Dendritic cell treated with granulocyte-macrophage colony-stimulating factor and Interleukin-4, amounts not matched to agents 40 ng/mL and 50 ng/mL, for 4 days (primary cell): ENCODE measurements at regions of chr10 and their contacts with region 1.

Region 1: GRCh38 chr10:123043409-123043925 is 34.7 kb downstream of the ACADSB start:
- H3K4me3 Mint-ChIP-seq: no peak overlapping the region
- H3K27ac Mint-ChIP-seq: no peak overlapping the region
- H3K4me1 Mint-ChIP-seq: peaks cover 11% of the 10 kb centered on the region
- H3K27me3 Mint-ChIP-seq: no peaks in the 10 kb centered on the region

Region 2: DNA sequence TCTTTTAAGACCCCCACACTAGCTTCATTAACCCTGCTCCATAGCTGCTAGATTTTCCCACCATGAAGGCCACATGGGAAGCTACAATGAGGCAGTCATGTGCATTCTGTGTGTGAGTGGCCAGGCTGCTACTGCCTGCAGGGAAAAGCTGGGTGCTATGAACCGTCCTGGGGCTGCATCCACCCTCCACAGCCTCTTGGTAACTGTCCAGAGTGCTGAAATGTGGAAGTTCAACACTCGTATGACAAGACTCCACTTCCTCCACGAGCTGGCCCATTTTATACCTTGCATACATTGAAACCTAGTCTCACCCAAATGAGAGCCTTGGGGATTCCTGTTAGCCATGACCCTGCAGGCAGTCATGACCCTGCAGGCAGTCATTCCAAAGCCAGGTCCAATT is 257.2 kb before region 1 on chr10:
- intact Hi-C with region 1: no loop called
- H3K4me3 Mint-ChIP-seq: no peak overlapping the region
- H3K27ac Mint-ChIP-seq: no peak overlapping the region
- H3K4me1 Mint-ChIP-seq: no peaks in the 10 kb centered on the region
- H3K27me3 Mint-ChIP-seq: no peaks in the 10 kb centered on the region

Region 3: DNA sequence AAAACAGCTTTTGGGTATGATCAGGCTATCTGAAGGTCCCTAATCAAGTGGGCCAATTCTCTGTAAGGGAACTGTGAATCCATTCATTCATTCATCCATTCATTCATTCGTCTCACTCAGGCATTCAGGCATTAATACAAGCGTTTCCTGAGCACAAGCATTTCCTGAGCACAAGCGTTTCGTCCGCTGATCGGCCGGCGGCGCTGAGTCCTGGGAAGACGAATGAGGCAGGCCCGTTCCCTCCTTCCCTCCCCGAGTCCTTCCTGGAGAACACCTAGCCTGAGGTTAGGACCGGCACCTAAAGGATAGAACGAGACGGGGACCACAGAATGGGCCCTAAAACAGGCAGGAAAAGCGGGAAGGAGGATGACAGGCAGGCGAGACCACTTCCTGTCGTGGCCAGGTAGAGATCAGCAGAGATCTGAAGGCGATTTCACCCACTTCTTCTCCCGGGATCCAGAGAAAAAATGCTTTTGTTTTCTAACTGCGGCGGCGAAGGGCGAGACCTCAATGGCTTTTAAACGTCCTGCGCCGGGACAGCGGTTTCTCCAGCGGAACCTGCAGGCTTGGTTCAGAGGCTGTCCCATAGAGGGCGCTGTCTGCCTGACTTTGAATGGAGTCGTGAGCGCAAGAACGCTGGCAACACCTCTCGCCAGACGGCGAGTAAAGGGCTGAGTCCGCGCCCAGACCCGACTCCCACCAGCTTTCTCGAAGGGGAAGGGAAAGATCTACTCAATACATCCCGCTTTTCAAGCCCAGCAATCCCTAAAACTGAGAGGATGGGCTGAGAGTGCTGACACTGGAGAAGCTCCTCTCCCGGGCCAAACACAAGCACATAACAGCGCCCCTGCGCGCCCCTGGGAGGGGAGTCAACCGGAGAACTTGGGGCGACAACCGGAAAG is 89.4 kb after region 1 on chr10:
- intact Hi-C with region 1: loop called (anchors 5 kb)
- H3K4me3 Mint-ChIP-seq: no peak overlapping the region
- H3K27ac Mint-ChIP-seq: no peak overlapping the region
- H3K4me1 Mint-ChIP-seq: peaks cover 28% of the 10 kb centered on the region
- H3K27me3 Mint-ChIP-seq: peaks cover 90% of the 10 kb centered on the region

Region 4: DNA sequence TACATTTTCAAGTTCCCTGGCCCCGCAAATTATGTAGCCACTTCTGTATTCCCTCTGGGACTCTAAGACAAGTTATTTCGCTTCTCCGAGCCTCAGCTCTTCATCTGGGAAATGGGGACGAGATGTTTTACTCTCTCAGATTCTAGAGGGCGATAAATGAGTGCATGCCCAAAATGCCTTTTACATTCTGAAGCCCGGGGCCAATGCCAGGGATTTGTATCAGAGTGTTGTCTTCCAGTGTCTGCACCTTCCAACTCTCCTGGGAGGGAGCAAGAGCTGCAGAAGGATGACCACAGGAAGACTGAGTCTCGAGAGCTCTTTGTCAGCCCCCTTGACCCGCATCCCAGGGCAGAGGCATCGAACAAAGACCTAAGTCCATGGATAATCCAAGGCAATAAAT is 150.6 kb after region 1 on chr10:
- intact Hi-C with region 1: no loop called
- H3K4me3 Mint-ChIP-seq: no peak overlapping the region
- H3K27ac Mint-ChIP-seq: no peak overlapping the region
- H3K4me1 Mint-ChIP-seq: no peaks in the 10 kb centered on the region
- H3K27me3 Mint-ChIP-seq: no peaks in the 10 kb centered on the region

Region 5: GRCh38 chr10:123380497-123381085 is 337.1 kb after region 1 on chr10:
- intact Hi-C with region 1: loop called (anchors 2 kb)
- H3K4me3 Mint-ChIP-seq: no peak overlapping the region
- H3K27ac Mint-ChIP-seq: no peak overlapping the region
- H3K4me1 Mint-ChIP-seq: no peaks in the 10 kb centered on the region
- H3K27me3 Mint-ChIP-seq: peaks cover 21% of the 10 kb centered on the region

Region 6: DNA sequence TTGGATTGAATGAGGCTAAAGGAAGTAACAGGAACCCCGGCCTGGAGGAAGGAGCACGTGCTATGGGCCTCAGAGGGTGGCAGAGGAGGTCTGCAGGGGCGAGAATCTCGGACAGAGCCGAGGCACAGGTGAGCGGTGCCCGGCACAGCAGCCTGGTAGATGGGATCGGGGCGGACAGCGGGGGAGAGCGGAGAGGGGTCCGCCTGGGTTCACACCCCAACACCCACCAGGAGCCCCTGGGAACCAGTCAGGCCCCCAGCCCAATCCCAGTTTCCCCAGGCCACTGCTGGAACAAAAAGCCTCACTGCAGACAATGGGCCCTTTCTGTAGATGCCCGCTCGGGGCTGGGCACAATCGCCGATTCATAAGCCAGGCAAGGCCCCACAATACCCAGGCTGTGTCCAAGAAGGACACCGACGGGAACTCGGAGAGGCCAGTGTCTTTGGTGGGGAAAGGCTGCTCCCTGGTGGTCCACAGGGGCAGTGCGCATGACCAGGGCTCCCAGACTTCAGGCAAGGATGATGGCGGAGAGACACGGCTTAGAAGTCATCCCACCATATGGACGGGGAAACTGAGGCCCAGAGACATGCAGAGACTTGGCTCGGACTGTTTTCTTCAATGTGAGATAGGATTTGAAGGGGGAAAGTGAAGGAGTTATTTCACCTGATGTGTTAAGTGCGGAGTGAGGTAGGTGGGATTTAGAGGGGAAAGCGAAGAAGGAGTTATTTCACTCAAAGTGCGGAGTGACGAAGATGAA is 515.8 kb after region 1 on chr10:
- intact Hi-C with region 1: loop called (anchors 1 kb)
- H3K4me3 Mint-ChIP-seq: no peak overlapping the region
- H3K27ac Mint-ChIP-seq: no peak overlapping the region
- H3K4me1 Mint-ChIP-seq: no peaks in the 10 kb centered on the region
- H3K27me3 Mint-ChIP-seq: peaks cover 21% of the 10 kb centered on the region

Region 7: GRCh38 chr10:123967396-123968243 is 924.2 kb after region 1 on chr10:
- intact Hi-C with region 1: loop called (anchors 10 kb)
- H3K4me3 Mint-ChIP-seq: no peak overlapping the region
- H3K27ac Mint-ChIP-seq: no peak overlapping the region
- H3K4me1 Mint-ChIP-seq: no peaks in the 10 kb centered on the region
- H3K27me3 Mint-ChIP-seq: peaks cover 67% of the 10 kb centered on the region